Dendritic cell treated with granulocyte-macrophage colony-stimulating factor and Interleukin-4, amounts not matched to agents 40 ng/mL and 50 ng/mL, for 4 days (primary cell): ENCODE measurements at regions of chr12 and their contacts with region 1.

Region 1: GRCh38 chr12:89333564-89334252 is 18.6 kb downstream of the DUSP6 start:
- H3K4me3 Mint-ChIP-seq: peak overlapping the region; percentile 30
- H3K27ac Mint-ChIP-seq: peak overlapping the region; percentile 72
- H3K4me1 Mint-ChIP-seq: peaks cover 26% of the 10 kb centered on the region
- H3K27me3 Mint-ChIP-seq: no peaks in the 10 kb centered on the region

Region 2: GRCh38 chr12:88970742-88971141 is 363.0 kb before region 1 on chr12:
- intact Hi-C with region 1: no loop called
- H3K4me3 Mint-ChIP-seq: no peak overlapping the region
- H3K27ac Mint-ChIP-seq: no peak overlapping the region
- H3K4me1 Mint-ChIP-seq: no peaks in the 10 kb centered on the region
- H3K27me3 Mint-ChIP-seq: no peaks in the 10 kb centered on the region

Region 3: GRCh38 chr12:89267404-89267803 is 66.3 kb before region 1 on chr12:
- intact Hi-C with region 1: loop called (anchors 5 kb)
- H3K4me3 Mint-ChIP-seq: no peak overlapping the region
- H3K27ac Mint-ChIP-seq: no peak overlapping the region
- H3K4me1 Mint-ChIP-seq: peaks cover 21% of the 10 kb centered on the region
- H3K27me3 Mint-ChIP-seq: no peaks in the 10 kb centered on the region

Region 4: GRCh38 chr12:89345830-89346740 is 12.4 kb after region 1 on chr12:
- intact Hi-C with region 1: loop called (anchors 1 kb)
- H3K4me3 Mint-ChIP-seq: peak overlapping the region; percentile 68
- H3K27ac Mint-ChIP-seq: peak overlapping the region; percentile 93
- H3K4me1 Mint-ChIP-seq: peaks cover 70% of the 10 kb centered on the region
- H3K27me3 Mint-ChIP-seq: peaks cover 4% of the 10 kb centered on the region